GM12878 (cell line): ENCODE measurements at regions of chr1 and their contacts with region 1.

Region 1: DNA sequence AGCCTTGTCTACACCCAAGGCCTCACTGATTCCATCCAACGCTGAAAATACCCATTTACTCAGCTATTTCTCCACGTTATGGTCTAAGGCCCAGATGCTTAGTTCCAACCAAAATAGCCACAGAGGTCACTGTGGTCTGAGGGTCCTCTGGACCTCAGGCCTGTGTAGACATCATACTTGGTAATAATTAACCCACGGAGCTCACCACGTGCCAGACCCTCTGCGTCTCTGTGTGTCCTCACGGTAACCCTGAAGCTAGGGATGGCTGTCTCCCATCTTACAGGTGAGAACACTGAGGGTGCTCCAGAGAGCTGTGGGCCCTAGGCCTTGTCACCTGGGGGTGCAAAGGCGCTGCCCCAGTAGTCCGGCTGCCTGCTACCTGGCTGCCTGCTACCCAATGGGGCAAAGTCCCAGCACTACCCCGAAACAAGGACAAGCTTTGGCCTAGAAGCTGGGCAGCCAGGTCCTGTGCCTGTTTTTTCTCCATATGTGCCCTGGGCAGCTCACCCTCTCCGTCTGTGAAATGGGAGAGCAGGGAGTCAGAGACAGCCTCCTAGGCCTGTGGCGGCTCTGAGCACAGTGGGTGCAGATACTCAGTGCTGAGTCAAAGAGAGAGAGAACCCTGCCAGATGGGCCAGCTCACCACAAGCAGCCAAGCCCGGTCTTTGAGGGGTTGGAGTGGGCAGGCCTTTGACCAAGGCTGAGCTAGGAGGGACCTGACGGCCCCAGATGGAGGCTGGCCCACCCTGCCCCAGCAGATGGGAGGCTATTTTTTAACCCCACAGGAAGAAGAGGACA is 17.0 kb upstream of the RUNX3 start:
- DNase-seq: peak; percentile 70
- ATAC-seq: peak; percentile 84
- H3K4me3 ChIP-seq: 0 out of 2 replicates have a peak overlapping the region, but pooled peaks have one; percentile 44
- H3K27ac ChIP-seq: peak overlapping the region; percentile 85
- H3K4me1 ChIP-seq: peaks cover 56% of the 10 kb centered on the region
- H3K27me3 ChIP-seq: no peaks in the 10 kb centered on the region
- CTCF ChIP-seq: no peak
- EP300 ChIP-seq: peak; percentile 22 to 47; a peak in 2 of 4 replicates
- POLR2A ChIP-seq: peak; percentile 61; the same call in 1 of the 2 replicates
- RAD21 ChIP-seq: no peak

Region 2: GRCh38 chr1:24874611-24875234 is 72.3 kb before region 1 on chr1:
- CTCF ChIA-PET with region 1: no interaction called
- POLR2A ChIA-PET with region 1: no interaction called
- RAD21 ChIA-PET with region 1: no interaction called
- SMC1A ChIA-PET with region 1: no interaction called
- in situ Hi-C with region 1: no loop called
- intact Hi-C with region 1: no loop called
- DNase-seq: no peak
- ATAC-seq: no peak
- H3K4me3 ChIP-seq: no peak overlapping the region
- H3K27ac ChIP-seq: no peak overlapping the region
- H3K4me1 ChIP-seq: peaks cover 7% of the 10 kb centered on the region
- H3K27me3 ChIP-seq: no peaks in the 10 kb centered on the region; a peak in 2 of 4 replicates
- CTCF ChIP-seq: no peak
- EP300 ChIP-seq: no peak
- POLR2A ChIP-seq: no peak
- RAD21 ChIP-seq: no peak

Region 3: DNA sequence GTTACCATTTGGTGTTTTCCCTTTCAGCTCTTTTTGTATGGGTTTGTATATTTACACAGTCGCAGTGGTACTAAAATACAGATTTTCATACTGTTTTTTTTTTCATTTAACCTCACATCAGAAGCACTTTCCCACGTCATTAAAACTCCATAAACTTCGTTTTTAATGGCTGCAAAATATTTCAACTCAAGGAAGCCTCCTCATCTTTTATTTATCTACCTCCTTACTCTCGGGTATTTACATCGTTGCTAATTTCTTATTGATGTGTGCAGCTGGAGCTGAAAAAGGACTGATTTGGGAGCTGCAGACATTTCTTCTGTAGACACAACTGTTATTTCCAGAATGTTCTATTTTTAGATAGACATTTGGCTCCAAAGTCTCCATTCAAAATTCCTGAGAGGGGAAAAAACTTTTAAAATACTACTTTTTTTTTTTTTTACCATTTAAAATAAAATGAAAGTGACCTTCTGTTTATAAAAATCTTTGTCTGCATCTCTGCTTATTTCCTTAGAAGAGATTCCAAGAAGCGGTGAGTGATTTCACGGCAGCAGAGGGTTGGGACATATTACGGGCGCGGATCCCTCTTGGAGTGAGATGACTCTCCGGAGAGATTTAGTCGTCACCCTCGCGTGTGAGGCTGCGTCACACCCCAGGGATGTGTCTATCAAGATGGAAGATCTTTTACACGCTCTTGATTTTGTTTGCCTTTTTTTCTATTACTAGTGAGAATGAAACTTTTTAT is 27.1 kb before region 1 on chr1:
- CTCF ChIA-PET with region 1: interaction called, 314 read pairs
- POLR2A ChIA-PET with region 1: interaction called, 3 read pairs
- RAD21 ChIA-PET with region 1: interaction called, 31 read pairs
- SMC1A ChIA-PET with region 1: interaction called, 391 read pairs
- in situ Hi-C with region 1: no loop called
- intact Hi-C with region 1: no loop called
- DNase-seq: no peak
- ATAC-seq: no peak
- H3K4me3 ChIP-seq: no peak overlapping the region
- H3K27ac ChIP-seq: peak overlapping the region; percentile 67; the same call in 1 of the 2 replicates
- H3K4me1 ChIP-seq: peaks cover 83% of the 10 kb centered on the region
- H3K27me3 ChIP-seq: no peaks in the 10 kb centered on the region
- CTCF ChIP-seq: no peak
- EP300 ChIP-seq: no peak
- POLR2A ChIP-seq: no peak
- RAD21 ChIP-seq: no peak

Region 4: GRCh38 chr1:25031966-25032667 is 85.1 kb after region 1 on chr1:
- CTCF ChIA-PET with region 1: interaction called, 396 read pairs
- POLR2A ChIA-PET with region 1: interaction called, 20 read pairs
- RAD21 ChIA-PET with region 1: interaction called, 68 read pairs
- SMC1A ChIA-PET with region 1: interaction called, 292 read pairs
- in situ Hi-C with region 1: no loop called
- intact Hi-C with region 1: no loop called
- DNase-seq: peak; percentile 94
- ATAC-seq: peak; percentile 44
- H3K4me3 ChIP-seq: peak overlapping the region; percentile 73
- H3K27ac ChIP-seq: peak overlapping the region; percentile 100
- H3K4me1 ChIP-seq: peaks cover 93% of the 10 kb centered on the region
- H3K27me3 ChIP-seq: no peaks in the 10 kb centered on the region
- CTCF ChIP-seq: peak in 1 of 3 experiments; percentile 30; a peak in 1 of 6 replicates
- EP300 ChIP-seq: peak in 1 of 2 experiments; percentile 17; a peak in 1 of 4 replicates
- POLR2A ChIP-seq: peak; percentile 66
- RAD21 ChIP-seq: peak; percentile 33; the same call in 1 of the 2 replicates